ENCODE measurements at regions of chr11 and their contacts with region 1.

Region 1: DNA sequence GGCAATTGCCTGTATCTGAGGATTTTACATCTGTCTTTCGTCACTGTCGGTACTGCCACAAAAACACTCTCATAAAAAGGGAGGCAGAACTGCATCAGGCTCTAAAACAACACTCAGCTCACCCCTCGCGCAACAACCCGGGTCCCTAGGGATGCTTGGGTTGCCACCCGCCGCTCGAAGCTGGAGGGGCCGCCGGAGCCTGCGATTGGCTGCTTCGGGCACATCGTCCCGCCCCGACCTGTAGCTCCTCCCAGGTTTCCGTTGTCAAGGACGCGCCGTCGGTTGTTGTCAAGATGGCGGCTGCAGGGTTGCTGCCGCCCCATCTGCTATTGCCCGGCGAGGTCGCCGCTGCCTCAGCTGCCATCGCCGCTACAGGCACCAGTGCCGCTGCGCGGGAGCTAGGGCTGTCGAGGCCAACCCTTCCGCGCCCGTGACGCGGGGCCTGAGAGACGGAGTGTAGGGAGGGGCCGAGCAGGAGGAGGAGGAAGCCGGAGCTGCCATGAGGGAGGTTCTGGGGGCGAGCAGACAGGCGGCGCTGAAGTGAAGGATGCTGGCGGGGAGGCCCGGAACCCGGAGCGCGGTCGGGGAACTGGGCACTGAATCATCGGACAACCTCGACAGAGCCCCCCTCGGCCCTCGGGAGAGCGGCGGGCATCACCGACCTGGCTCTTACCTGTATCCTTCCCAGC is at the start of gene CEP126:
- DNase-seq: peak; percentile 77 to 98
- H3K4me3 ChIP-seq: peak within 1 kb of the TSS; percentile 46 to 74
- H3K27ac ChIP-seq: peak within 1 kb of the TSS; percentile 86 to 97
- H3K4me1 ChIP-seq: peaks cover 6 to 9% of the 10 kb centered on the region in 2 donors
- H3K27me3 ChIP-seq: no peaks in the 10 kb centered on the region
- CTCF ChIP-seq: peak; percentile 40 to 59 (median 42)
- total RNA-seq, gene CEP126: 7.2 TPM

Region 2: GRCh38 chr11:101860696-101861427 is 54.0 kb before region 1 on chr11:
- intact Hi-C with region 1: loop called (anchors 5 kb)
- DNase-seq: peak in 1 of 2 donors; percentile 64
- H3K4me3 ChIP-seq: no peak overlapping the region
- H3K27ac ChIP-seq: no peak overlapping the region
- H3K4me1 ChIP-seq: no peaks in the 10 kb centered on the region
- H3K27me3 ChIP-seq: no peaks in the 10 kb centered on the region
- CTCF ChIP-seq: peak; percentile 66 to 78 (median 68)

Region 3: DNA sequence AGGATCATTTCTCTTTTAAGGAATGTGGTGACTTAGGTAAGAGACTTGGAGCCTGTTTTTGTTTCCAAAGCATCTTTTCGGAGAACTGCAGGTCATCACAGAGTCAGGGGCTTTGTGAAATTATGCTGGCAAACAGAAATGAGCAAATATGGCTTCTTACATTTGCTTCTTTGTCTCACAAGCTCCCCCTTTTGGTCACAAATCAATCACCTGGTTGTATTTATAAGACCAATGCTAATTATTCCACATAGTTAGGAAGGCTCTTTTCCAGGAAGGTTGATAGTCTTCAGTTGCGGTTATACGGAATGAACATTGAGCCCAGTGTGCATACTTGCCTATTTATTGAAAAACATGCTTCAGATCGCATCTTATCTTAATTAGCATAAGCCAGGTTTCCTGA is 34.7 kb before region 1 on chr11:
- intact Hi-C with region 1: no loop called
- DNase-seq: no peak
- H3K4me3 ChIP-seq: no peak overlapping the region
- H3K27ac ChIP-seq: no peak overlapping the region
- H3K4me1 ChIP-seq: no peaks in the 10 kb centered on the region
- H3K27me3 ChIP-seq: no peaks in the 10 kb centered on the region
- CTCF ChIP-seq: peak in 1 of 3 experiments; percentile 10

Region 4: DNA sequence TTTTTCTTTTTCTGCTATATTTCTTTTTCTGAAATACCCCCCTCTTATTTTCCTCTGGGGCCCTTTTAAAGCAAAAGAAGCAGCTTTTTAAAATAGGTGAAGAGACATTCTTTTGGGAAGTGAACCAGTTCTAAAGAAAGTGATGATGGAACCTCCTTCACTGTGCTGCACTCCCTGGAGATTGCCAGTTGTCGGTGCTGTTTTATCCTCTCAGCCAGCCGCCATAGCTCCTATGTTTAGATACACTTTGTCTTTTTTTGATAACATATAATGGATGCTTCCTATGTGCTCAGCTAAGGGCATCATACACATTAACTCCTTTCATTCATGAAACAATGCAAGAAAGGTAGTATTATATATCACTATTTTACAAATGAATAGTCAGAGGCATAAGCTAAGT is 146.4 kb after region 1 on chr11:
- intact Hi-C with region 1: no loop called
- DNase-seq: no peak
- H3K4me3 ChIP-seq: no peak overlapping the region
- H3K27ac ChIP-seq: no peak overlapping the region
- H3K4me1 ChIP-seq: no peaks in the 10 kb centered on the region
- H3K27me3 ChIP-seq: no peaks in the 10 kb centered on the region
- CTCF ChIP-seq: peak in 2 of 3 experiments; percentile 18 to 25

Region 5: DNA sequence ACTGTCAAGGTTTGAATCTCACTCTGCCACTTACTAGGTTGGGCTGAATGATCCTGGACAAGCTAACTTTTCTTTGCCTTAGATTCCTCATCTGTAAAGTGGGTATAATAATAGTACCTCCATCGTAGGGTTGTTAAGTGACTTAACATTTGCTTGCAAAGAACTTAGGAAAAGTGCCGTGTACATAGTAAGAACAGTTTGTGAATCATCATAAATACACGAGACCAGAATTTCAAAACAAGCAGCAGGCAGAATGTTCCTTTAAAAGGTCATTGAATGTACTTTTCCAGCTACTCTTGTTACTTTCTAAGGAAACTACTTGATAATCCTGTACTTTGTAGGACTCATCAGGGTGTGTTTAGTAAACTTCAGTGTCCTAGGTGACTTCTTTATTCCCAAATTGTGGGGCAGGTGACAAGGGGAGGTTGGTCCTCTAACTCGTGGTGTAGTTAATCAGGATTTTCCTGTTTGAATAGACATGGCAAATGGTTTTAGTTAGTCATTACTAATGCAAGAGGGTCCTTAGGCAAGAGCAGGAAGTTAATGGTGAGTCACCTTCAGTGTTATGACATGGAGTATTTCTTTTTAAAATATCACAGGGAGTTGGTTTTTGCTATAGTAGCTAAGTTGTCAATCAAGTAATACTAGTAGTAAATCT is 263.2 kb after region 1 on chr11:
- intact Hi-C with region 1: loop called (anchors 5 kb)
- DNase-seq: no peak
- H3K4me3 ChIP-seq: peak overlapping the region in 1 of 2 donors; percentile 24
- H3K27ac ChIP-seq: peak overlapping the region; percentile 88
- H3K4me1 ChIP-seq: peaks cover 0 to 19% of the 10 kb centered on the region in 2 donors
- H3K27me3 ChIP-seq: no peaks in the 10 kb centered on the region
- CTCF ChIP-seq: no peak

Region 6: DNA sequence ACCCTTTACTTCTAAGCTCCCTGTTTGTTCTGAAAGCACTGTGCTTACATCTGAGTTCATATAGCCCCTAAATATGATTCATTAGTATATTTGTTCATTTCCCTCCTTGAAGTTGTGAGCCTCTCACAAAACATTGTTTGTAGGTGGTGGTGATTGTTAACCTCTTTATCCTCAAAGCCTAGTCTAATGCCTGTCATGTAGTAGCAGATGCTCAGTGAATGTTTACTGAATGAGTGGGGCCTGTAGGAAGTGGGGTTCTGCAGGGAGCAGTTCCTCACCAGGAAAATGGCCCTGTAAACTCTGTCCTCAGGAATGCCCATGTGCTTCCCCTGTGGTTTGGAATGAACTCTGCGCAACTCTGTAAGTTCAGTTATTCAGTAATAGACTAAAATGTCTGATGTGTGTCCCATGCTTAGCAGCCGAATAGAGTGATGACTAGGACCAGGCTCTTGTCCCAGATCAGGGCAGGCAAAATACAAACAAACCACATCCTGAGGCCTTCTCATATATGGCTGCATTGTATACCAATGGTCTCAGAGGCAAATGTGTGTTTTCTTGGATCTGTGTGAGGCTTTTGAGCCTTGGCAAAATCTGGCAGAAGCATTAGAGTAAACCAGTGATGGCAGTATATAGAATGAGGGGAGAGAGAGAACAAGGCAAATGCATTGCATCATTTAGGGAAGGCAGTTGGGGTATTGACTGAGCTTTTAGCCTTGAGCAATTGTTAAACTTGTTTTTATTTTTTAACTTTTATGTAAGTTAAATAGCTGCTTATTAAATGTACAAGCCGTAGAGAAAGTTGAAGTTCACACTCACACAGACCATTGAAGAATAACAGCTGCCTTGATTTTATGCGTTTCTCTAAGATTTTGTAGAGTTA is 311.0 kb after region 1 on chr11:
- intact Hi-C with region 1: loop called (anchors 10 kb)
- DNase-seq: no peak
- H3K4me3 ChIP-seq: no peak overlapping the region
- H3K27ac ChIP-seq: peak overlapping the region; percentile 28 to 33
- H3K4me1 ChIP-seq: peaks cover 5 to 32% of the 10 kb centered on the region in 2 donors
- H3K27me3 ChIP-seq: no peaks in the 10 kb centered on the region
- CTCF ChIP-seq: no peak

Region 7: GRCh38 chr11:103091801-103092524 is 1177.1 kb after region 1 on chr11 and contains the start of gene DCUN1D5:
- intact Hi-C with region 1: loop called (anchors 10 kb)
- DNase-seq: peak; percentile 82 to 98
- H3K4me3 ChIP-seq: peak within 1 kb of the TSS; percentile 88 to 91
- H3K27ac ChIP-seq: peak within 1 kb of the TSS; percentile 66 to 76
- H3K4me1 ChIP-seq: peaks cover 0 to 15% of the 10 kb centered on the region in 2 donors
- H3K27me3 ChIP-seq: no peaks in the 10 kb centered on the region
- CTCF ChIP-seq: no peak
- total RNA-seq, gene DCUN1D5: 337 TPM